Left ventricle myocardium superior (tissue), 1 donor: ENCODE measurements at regions of chr12 and their contacts with region 1.

Region 1: DNA sequence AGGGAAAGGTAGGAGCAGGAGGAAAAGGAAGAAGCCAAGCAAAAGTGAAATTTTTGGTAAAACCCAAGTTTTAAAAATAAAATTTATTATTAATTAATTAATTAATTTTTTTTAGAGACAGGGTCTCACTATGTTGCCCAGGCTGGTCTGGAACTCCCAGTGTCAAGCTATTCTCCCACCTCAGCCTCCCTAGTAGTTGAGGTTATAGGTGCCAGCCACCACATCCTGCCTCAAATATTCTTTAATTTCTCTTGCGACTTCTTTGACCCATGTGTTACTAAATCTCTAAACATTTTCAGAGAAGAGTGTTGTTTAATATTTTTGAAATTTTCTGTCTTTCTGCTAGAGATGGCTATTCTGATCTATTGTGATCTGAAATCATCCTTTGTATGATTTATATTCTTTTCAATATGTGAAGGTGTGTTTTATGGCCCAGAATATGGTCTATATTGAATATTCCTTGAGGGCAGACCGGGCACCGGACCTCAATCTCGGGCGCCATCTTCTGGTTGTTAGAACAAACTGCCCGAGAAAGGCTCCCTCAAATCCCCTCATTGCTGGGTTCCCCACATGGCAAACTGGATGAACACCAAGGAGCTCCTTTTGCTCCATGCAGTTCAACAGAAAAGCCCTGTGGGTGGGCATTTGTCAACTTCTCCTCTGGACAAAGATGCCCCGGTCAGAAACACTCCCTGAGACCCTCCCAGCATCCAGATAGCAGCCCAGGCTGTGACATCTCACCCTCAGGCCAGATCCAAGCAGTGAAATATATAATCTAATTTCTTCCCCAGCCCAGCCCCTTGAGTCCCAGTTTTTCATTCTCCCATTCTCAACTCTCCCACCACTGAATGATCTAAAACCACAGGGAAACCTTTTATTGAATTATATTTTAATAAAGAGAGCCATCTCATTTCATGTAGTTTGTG is 110.5 kb downstream of the ASCL4 start:
- DNase-seq: peak; percentile 39
- ATAC-seq: peak; percentile 57

Region 2: DNA sequence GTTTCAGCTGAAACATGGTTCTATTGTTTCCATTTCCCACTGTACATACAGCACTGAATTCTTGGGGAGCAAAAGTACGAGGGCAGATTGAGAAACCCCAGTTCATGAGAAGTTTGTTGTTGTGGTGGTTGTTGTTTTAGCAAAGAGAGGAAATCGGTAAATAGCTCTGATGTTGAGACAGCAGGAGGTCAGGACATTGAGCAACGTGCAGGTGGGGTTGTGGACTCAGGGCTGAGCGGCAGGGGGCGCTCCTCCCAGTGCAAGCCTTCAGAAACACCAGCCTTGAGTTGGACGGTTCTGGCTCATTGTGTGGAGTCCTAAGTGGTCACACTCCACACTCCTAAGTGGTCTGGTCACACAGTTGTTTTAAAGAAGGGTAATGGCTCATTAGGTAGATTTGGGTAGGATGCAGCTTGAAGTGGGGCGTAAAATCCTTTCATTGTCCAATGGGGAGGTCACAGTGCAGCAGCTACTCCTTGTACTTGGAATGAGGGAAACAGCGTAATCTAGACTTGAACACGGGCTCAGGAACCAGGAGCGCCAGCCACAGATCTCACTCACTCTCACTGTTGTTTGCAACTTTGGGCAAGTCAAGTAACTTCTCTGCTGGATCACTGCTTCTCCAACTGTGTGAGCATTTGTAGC is 213.9 kb before region 1 on chr12:
- intact Hi-C with region 1: loop called (anchors 10 kb)
- DNase-seq: no peak
- ATAC-seq: peak; percentile 23

Region 3: DNA sequence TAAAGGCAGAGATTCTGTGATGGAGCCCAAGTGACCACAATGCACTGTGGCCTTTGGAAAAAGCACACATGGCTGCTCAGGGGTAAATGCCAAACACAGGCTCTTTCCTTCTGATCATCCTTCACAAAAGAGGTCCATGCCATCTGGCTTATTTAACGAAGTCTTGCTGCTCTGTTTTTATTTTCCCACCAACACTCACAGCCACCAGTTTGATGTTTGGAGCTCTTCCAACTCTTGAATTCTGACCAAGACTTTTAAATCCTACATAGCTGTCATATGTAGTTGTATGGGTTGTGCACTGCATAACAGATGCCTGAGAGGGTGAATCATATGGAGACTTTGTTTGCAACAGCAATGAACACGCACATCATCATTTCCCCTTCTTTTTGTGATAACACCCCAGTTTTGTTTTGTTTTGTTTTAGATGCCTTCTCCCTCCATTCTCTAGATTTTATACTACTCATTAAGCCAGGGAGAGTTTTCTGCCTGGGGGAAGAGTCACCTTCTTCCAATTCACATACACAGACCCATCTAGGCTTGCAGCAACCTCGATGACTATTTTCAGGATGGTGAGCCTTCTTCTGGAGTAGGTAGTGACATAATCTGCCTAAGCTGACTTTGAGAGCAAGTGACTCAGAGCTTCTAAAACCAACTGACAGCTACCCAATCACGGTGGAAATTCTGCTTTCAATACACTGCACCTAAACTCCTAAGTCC is 98.9 kb after region 1 on chr12:
- intact Hi-C with region 1: no loop called
- DNase-seq: no peak
- ATAC-seq: no peak